Activated naive CD4-positive, alpha-beta T cell treated with anti-CD3 and anti-CD28 coated beads for 36 hours (primary cell): ENCODE measurements at regions of chr3 and their contacts with region 1.

Region 1: DNA sequence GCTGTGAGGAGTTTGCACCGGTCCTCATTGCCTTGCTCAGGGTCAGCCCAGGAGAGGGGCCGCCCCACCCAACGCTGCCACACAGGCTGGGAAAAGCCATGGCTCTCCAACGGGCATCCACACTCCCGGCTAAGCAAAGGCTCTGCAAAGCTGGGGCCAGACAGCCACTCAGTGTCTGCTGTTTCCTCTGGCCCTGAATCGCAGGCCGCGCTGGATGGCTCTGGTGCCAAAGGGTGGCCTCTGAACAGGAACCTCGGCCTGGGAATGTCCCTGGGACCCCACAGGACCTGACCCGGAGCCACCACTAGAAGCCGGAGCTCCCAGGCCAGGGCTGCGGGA is 42.9 kb downstream of the RPN1 start:
- DNase-seq: no peak
- H3K4me3 Mint-ChIP-seq: no peak overlapping the region
- H3K27ac Mint-ChIP-seq: no peak overlapping the region
- H3K4me1 Mint-ChIP-seq: peaks cover 2% of the 10 kb centered on the region
- H3K27me3 Mint-ChIP-seq: peaks cover 2% of the 10 kb centered on the region

Region 2: GRCh38 chr3:128307029-128307633 is 300.5 kb before region 1 on chr3:
- CTCF ChIA-PET with region 1: no interaction called
- intact Hi-C with region 1: no loop called
- DNase-seq: no peak
- H3K4me3 Mint-ChIP-seq: no peak overlapping the region
- H3K27ac Mint-ChIP-seq: no peak overlapping the region
- H3K4me1 Mint-ChIP-seq: peaks cover 10% of the 10 kb centered on the region
- H3K27me3 Mint-ChIP-seq: no peaks in the 10 kb centered on the region

Region 3: DNA sequence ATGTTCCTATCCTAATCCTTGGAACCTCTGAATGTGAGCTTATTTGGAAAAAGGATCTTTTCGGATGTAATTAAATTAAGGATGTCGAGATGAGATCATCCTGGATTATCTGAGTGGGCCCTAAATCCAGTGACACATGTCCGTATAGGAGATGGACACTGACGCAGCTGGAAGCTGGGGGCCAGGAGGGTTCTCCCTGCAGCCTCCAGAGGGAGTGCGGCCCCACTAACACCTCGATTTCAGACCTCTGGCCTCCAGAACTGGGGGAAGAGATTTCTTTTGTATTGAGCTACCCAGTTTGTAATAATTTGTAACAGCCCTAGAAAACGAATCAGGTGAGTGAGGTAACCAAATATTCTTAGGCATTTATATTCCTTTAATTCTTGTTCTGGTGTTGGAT is 143.5 kb before region 1 on chr3:
- CTCF ChIA-PET with region 1: no interaction called
- intact Hi-C with region 1: no loop called
- DNase-seq: no peak
- H3K4me3 Mint-ChIP-seq: no peak overlapping the region
- H3K27ac Mint-ChIP-seq: no peak overlapping the region
- H3K4me1 Mint-ChIP-seq: peaks cover 6% of the 10 kb centered on the region
- H3K27me3 Mint-ChIP-seq: peaks cover 3% of the 10 kb centered on the region

Region 4: GRCh38 chr3:128497387-128498126 is 110.1 kb before region 1 on chr3:
- CTCF ChIA-PET with region 1: interaction called, 11 read pairs
- intact Hi-C with region 1: loop called (anchors 2 kb)
- DNase-seq: peak; percentile 74
- H3K4me3 Mint-ChIP-seq: peak overlapping the region; percentile 68
- H3K27ac Mint-ChIP-seq: no peak overlapping the region
- H3K4me1 Mint-ChIP-seq: peaks cover 3% of the 10 kb centered on the region
- H3K27me3 Mint-ChIP-seq: peaks cover 49% of the 10 kb centered on the region

Region 5: DNA sequence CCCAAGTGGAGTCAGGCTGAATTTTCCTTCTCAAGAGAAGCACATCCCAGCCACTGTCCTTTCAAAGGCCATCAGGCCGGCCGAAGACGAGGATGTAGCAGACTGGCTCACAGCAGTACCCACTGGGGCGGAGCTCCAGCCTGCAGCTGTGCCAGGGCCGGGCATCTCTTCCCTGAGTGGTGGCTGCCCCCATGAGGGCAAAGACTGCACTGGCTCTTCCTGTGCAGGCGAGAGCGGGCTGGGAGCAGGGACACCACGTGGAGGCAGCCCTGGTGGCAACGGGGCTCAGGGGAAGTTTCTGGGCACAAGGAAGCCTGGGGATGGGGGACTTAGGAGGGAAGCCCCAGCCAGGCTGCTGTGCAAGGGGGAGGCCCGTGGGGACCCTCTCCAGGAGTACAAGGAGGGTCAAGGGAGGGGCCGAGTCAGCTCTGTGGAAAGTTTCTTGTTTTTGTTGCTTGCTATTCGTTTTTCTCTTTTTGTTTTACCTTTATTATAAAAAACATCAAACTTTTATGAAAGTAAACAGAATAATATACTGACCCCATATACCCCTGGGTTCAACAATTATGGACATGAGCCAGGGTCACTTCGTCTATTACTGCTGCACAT is 23.2 kb before region 1 on chr3:
- CTCF ChIA-PET with region 1: interaction called, 4 read pairs
- intact Hi-C with region 1: loop called (anchors 1 kb)
- DNase-seq: peak; percentile 76
- H3K4me3 Mint-ChIP-seq: no peak overlapping the region
- H3K27ac Mint-ChIP-seq: no peak overlapping the region
- H3K4me1 Mint-ChIP-seq: no peaks in the 10 kb centered on the region
- H3K27me3 Mint-ChIP-seq: no peaks in the 10 kb centered on the region